Heart left ventricle (tissue), 16 donors: ENCODE measurements at regions of chr1 and their contacts with region 1.

Region 1: DNA sequence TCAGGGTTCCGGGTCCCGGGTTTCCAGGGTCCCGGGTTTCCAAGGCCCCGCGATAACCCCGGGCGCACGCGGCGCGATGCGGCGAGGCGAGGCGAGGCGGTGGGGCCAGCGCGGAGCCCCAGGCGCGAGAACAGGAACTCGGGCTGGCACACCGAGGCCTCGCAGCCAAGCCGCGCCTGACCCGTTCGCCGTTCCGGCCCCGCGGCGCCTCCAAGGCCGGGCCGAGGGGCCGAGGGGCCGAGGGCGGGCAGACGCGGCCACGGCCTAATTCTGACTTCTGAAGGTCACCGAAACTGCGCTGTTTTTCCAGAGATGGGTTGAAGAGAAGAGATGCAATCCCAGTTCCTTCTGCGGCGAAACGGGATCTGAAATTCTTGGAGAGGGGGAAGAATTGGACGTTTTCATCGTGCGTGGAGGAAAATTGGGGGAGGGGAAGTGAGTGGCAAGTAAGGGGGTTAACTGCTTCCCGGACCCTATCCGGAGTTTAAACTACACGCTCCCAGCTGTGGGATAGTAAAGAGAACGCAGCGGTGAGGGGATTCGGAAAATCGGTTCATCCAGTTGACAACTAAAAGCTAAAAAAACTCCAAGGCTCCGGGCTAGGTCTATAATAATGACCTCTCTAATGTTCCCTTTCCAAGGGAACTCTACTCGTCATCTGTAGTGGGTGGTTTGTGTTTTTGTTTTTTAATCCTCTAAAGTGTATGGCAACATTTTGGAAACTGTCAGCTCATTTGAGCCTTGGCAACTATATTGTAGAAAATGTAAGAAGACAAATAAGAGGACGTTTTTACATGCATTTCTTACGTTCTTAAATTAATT is 8.2 kb downstream of the TBX15 start:
- DNase-seq: no peak
- ATAC-seq: no peak
- H3K4me3 ChIP-seq: peak overlapping the region in 6 of 12 donors; percentile 1 to 36 (median 10)
- H3K27ac ChIP-seq: no peak overlapping the region
- H3K4me1 ChIP-seq: peaks cover 0 to 23% (median 8%) of the 10 kb centered on the region in 12 donors
- H3K27me3 ChIP-seq: peaks cover 36 to 100% (median 81%) of the 10 kb centered on the region in 9 donors
- CTCF ChIP-seq: no peak
- POLR2A ChIP-seq: no peak

Region 2: GRCh38 chr1:118826669-118827068 is 153.3 kb before region 1 on chr1:
- intact Hi-C with region 1: loop called in 1 of 10 experiments (anchors 10 kb)
- DNase-seq: no peak
- ATAC-seq: no peak
- H3K4me3 ChIP-seq: no peak overlapping the region
- H3K27ac ChIP-seq: no peak overlapping the region
- H3K4me1 ChIP-seq: no peaks in the 10 kb centered on the region
- H3K27me3 ChIP-seq: no peaks in the 10 kb centered on the region
- CTCF ChIP-seq: no peak
- POLR2A ChIP-seq: no peak